CD4-positive, alpha-beta T cell (primary cell): ENCODE measurements at regions of chr17 and their contacts with region 1.

Region 1: DNA sequence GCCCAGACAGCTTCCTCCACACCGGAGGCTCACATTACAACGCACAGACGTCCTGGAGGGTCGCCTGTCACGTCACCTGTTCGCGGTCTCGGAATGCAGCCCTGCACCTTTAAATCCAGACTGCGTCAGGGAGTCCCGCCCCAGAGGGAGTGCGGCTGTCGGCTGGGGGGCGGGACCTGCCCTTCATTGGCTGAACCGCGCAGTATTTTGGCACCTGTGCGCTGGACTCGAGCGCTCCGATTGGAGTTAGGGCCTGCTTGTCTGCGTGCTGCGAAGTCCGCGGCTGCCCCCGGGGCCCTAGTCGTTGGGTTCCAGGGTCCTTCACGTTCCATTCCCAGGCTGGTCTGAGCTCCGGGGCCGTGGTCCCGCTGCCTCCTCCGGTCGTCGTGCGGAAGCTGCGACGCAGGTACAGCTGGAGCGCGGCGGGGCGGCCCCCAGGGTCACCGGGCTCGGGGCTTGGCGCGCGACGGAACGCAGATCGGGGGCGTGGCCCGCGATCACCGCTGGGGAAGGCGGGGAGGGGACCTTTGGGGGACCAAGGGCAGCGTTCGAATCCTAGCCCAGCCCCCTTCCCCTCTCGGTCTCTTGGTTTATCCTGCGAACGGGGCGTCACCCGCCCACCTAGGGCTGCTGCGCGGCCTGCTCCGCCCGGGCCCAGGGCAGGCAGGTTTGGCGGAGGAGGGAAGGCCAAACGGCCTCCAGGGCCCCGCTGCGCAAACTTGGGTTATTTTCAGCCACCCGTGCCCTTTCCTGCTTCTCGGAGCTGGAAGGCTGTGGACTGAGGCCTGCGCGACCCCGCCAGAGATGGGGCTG is at the start of gene MIEF2:
- DNase-seq: peak; percentile 83 to 95 (median 90)
- ATAC-seq: peak; percentile 91
- H3K4me3 ChIP-seq: peak within 1 kb of the TSS; percentile 78
- H3K4me3 Mint-ChIP-seq: peak within 1 kb of the TSS; percentile 93
- H3K27ac ChIP-seq: peak within 1 kb of the TSS; percentile 82 to 85
- H3K27ac Mint-ChIP-seq: peak within 1 kb of the TSS; percentile 90
- H3K4me1 ChIP-seq: peaks cover 65% of the 10 kb centered on the region
- H3K4me1 Mint-ChIP-seq: peaks cover 48% of the 10 kb centered on the region
- H3K27me3 ChIP-seq: no peaks in the 10 kb centered on the region
- H3K27me3 Mint-ChIP-seq: no peaks in the 10 kb centered on the region
- CTCF ChIP-seq: no peak
- total RNA-seq, gene MIEF2: 10.7 to 14.3 TPM

Region 2: DNA sequence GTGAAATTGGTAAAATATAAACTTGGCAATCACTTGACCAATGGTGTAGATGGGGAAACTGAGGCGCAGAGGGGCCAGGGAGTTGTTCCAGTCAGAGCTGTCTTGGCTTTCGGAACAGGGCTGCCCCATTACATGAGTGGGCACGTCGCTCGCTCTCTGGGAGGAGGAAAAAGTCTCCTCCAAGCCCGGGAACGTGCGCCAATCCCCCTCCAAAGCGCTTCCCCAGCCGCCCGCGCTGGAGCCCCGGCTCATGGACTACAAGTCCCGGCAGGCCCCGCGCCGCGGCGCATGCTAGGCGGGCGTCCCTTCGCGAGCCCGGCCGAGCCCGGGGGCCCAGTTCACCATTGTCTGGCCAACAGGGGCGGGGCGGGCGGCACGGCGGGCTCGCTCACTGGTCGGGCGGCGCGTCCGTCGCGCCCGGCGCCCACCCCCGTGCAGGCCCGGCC is 35.4 kb before region 1 on chr17:
- CTCF ChIA-PET with region 1: no interaction called
- POLR2A ChIA-PET with region 1: interaction called, 3 read pairs
- intact Hi-C with region 1: loop called in 1 of 2 experiments (anchors 1 kb)
- DNase-seq: peak; percentile 90 to 97 (median 97)
- ATAC-seq: peak; percentile 98
- H3K4me3 ChIP-seq: peak overlapping the region; percentile 29
- H3K4me3 Mint-ChIP-seq: peak overlapping the region; percentile 84
- H3K27ac ChIP-seq: no peak overlapping the region
- H3K27ac Mint-ChIP-seq: peak overlapping the region; percentile 62
- H3K4me1 ChIP-seq: peaks cover 42% of the 10 kb centered on the region
- H3K4me1 Mint-ChIP-seq: peaks cover 25% of the 10 kb centered on the region
- H3K27me3 ChIP-seq: no peaks in the 10 kb centered on the region
- H3K27me3 Mint-ChIP-seq: no peaks in the 10 kb centered on the region
- CTCF ChIP-seq: no peak

Region 3: GRCh38 chr17:18363101-18364049 is 102.8 kb after region 1 on chr17 and contains the start of gene SHMT1:
- CTCF ChIA-PET with region 1: no interaction called
- POLR2A ChIA-PET with region 1: no interaction called
- intact Hi-C with region 1: loop called in 1 of 2 experiments (anchors 2 kb)
- DNase-seq: peak; percentile 77 to 95 (median 88)
- ATAC-seq: peak; percentile 100
- H3K4me3 ChIP-seq: peak within 1 kb of the TSS; percentile 69
- H3K4me3 Mint-ChIP-seq: peak within 1 kb of the TSS; percentile 97
- H3K27ac ChIP-seq: peak within 1 kb of the TSS in 1 of 2 donors; percentile 23
- H3K27ac Mint-ChIP-seq: peak within 1 kb of the TSS; percentile 79
- H3K4me1 ChIP-seq: peaks cover 16% of the 10 kb centered on the region
- H3K4me1 Mint-ChIP-seq: peaks cover 18% of the 10 kb centered on the region
- H3K27me3 ChIP-seq: no peaks in the 10 kb centered on the region
- H3K27me3 Mint-ChIP-seq: no peaks in the 10 kb centered on the region
- CTCF ChIP-seq: no peak
- total RNA-seq, gene SHMT1: 5.6 to 7.1 TPM